ENCODE measurements at regions of chr1 and their contacts with region 1.

Region 1: GRCh38 chr1:19311959-19312781 is at the starts of genes AKR7A2 and SLC66A1:
- DNase-seq: peak; percentile 91 to 95 (median 94)
- H3K4me3 ChIP-seq: peak within 1 kb of the TSS; percentile 69 to 90 (median 89)
- H3K4me3 Mint-ChIP-seq: peak within 1 kb of the TSS; percentile 81 to 90
- H3K27ac ChIP-seq: peak within 1 kb of the TSS; percentile 22 to 89
- H3K27ac Mint-ChIP-seq: peak within 1 kb of the TSS; percentile 74 to 90 (median 84)
- H3K4me1 ChIP-seq: peaks cover 59 to 62% of the 10 kb centered on the region in 2 donors
- H3K4me1 Mint-ChIP-seq: peaks cover 60% of the 10 kb centered on the region
- H3K27me3 ChIP-seq: no peaks in the 10 kb centered on the region
- H3K27me3 Mint-ChIP-seq: peaks cover 0 to 4% (median 0%) of the 10 kb centered on the region in 3 donors
- CTCF ChIP-seq: no peak
- polyA plus RNA-seq, gene AKR7A2: 19.5 to 117 (median 89.3) TPM
- polyA plus RNA-seq, gene SLC66A1: 9.1 to 21.1 (median 9.7) TPM

Region 2: GRCh38 chr1:18926315-18927081 is 385.7 kb before region 1 on chr1:
- intact Hi-C with region 1: no loop called
- DNase-seq: peak; percentile 92 to 96 (median 96)
- H3K4me3 ChIP-seq: peak overlapping the region in 2 of 3 experiments; percentile 4 to 62
- H3K4me3 Mint-ChIP-seq: peak overlapping the region; percentile 64 to 86
- H3K27ac ChIP-seq: peak overlapping the region; percentile 89 to 99
- H3K27ac Mint-ChIP-seq: peak overlapping the region; percentile 89 to 97 (median 95)
- H3K4me1 ChIP-seq: peaks cover 67 to 72% of the 10 kb centered on the region in 2 donors
- H3K4me1 Mint-ChIP-seq: peaks cover 74% of the 10 kb centered on the region
- H3K27me3 ChIP-seq: no peaks in the 10 kb centered on the region
- H3K27me3 Mint-ChIP-seq: peaks cover 3 to 7% (median 5%) of the 10 kb centered on the region in 3 donors
- CTCF ChIP-seq: no peak

Region 3: GRCh38 chr1:18956369-18957135 is 355.6 kb before region 1 on chr1 and contains the start of gene IFFO2:
- intact Hi-C with region 1: loop called in 1 of 2 experiments (anchors 5 kb)
- DNase-seq: peak; percentile 90 to 93 (median 92)
- H3K4me3 ChIP-seq: peak within 1 kb of the TSS; percentile 58 to 85 (median 81)
- H3K4me3 Mint-ChIP-seq: peak within 1 kb of the TSS; percentile 92 to 93
- H3K27ac ChIP-seq: peak within 1 kb of the TSS in 1 of 2 donors; percentile 41
- H3K27ac Mint-ChIP-seq: peak within 1 kb of the TSS in 5 of 7 donors; percentile 8 to 94 (median 71)
- H3K4me1 ChIP-seq: peaks cover 37 to 52% of the 10 kb centered on the region in 2 donors
- H3K4me1 Mint-ChIP-seq: peaks cover 52% of the 10 kb centered on the region
- H3K27me3 ChIP-seq: peaks cover 5 to 46% of the 10 kb centered on the region in 2 donors
- H3K27me3 Mint-ChIP-seq: peaks cover 40 to 56% (median 45%) of the 10 kb centered on the region in 3 donors
- CTCF ChIP-seq: no peak
- polyA plus RNA-seq, gene IFFO2: 0.78 to 17.5 (median 0.94) TPM

Region 4: GRCh38 chr1:19209990-19210771 is 102.0 kb before region 1 on chr1 and contains the start of gene UBR4:
- intact Hi-C with region 1: loop called in 1 of 2 experiments (anchors 5 kb)
- DNase-seq: peak; percentile 94 to 97 (median 97)
- H3K4me3 ChIP-seq: peak within 1 kb of the TSS; percentile 83 to 98 (median 96)
- H3K4me3 Mint-ChIP-seq: peak within 1 kb of the TSS; percentile 93 to 99
- H3K27ac ChIP-seq: peak within 1 kb of the TSS; percentile 94 to 99
- H3K27ac Mint-ChIP-seq: peak within 1 kb of the TSS; percentile 99 to 100 (median 99)
- H3K4me1 ChIP-seq: peaks cover 23 to 40% of the 10 kb centered on the region in 2 donors
- H3K4me1 Mint-ChIP-seq: peaks cover 49% of the 10 kb centered on the region
- H3K27me3 ChIP-seq: no peaks in the 10 kb centered on the region
- H3K27me3 Mint-ChIP-seq: no peaks in the 10 kb centered on the region
- CTCF ChIP-seq: no peak
- polyA plus RNA-seq, gene UBR4: 44.3 to 93.8 (median 49.4) TPM

Region 5: DNA sequence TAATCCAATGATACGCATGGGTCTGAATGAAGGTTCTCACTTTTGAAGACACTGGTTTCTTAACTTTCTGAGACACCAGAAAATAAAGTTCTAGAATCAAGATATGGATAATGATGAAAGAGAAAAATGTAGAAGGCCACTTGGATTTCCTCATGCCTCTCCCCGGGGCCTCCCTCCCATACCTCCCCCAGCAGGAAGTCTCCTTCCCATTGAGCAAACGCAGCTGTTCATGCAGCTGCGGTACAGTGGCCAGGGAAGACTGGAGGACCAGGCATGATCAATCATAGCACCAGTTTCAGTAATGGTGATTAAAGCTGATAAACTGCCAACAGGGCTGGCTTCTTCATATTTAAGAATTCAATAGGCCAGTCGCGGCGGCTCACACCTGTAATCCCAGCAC is 91.2 kb before region 1 on chr1:
- intact Hi-C with region 1: no loop called
- DNase-seq: no peak
- H3K4me3 ChIP-seq: no peak overlapping the region
- H3K4me3 Mint-ChIP-seq: no peak overlapping the region
- H3K27ac ChIP-seq: no peak overlapping the region
- H3K27ac Mint-ChIP-seq: peak overlapping the region in 1 of 7 donors; percentile 63
- H3K4me1 ChIP-seq: no peaks in the 10 kb centered on the region
- H3K4me1 Mint-ChIP-seq: peaks cover 4% of the 10 kb centered on the region
- H3K27me3 ChIP-seq: no peaks in the 10 kb centered on the region
- H3K27me3 Mint-ChIP-seq: peaks cover 0 to 1% (median 0%) of the 10 kb centered on the region in 3 donors
- CTCF ChIP-seq: no peak

Region 6: GRCh38 chr1:19251305-19252196 is 60.6 kb before region 1 on chr1 and contains the starts of genes EMC1 and MRTO4:
- intact Hi-C with region 1: loop called in 1 of 2 experiments (anchors 5 kb)
- DNase-seq: peak; percentile 74 to 75 (median 74)
- H3K4me3 ChIP-seq: peak within 1 kb of the TSS; percentile 67 to 87 (median 85)
- H3K4me3 Mint-ChIP-seq: peak within 1 kb of the TSS; percentile 90 to 93
- H3K27ac ChIP-seq: peak within 1 kb of the TSS; percentile 70 to 96
- H3K27ac Mint-ChIP-seq: peak within 1 kb of the TSS; percentile 90 to 98 (median 94)
- H3K4me1 ChIP-seq: peaks cover 23 to 35% of the 10 kb centered on the region in 2 donors
- H3K4me1 Mint-ChIP-seq: peaks cover 24% of the 10 kb centered on the region
- H3K27me3 ChIP-seq: no peaks in the 10 kb centered on the region
- H3K27me3 Mint-ChIP-seq: no peaks in the 10 kb centered on the region
- CTCF ChIP-seq: no peak
- polyA plus RNA-seq, gene EMC1: 14.7 to 27.1 (median 18.5) TPM
- polyA plus RNA-seq, gene MRTO4: 4.9 to 8.7 (median 8.4) TPM

Region 7: DNA sequence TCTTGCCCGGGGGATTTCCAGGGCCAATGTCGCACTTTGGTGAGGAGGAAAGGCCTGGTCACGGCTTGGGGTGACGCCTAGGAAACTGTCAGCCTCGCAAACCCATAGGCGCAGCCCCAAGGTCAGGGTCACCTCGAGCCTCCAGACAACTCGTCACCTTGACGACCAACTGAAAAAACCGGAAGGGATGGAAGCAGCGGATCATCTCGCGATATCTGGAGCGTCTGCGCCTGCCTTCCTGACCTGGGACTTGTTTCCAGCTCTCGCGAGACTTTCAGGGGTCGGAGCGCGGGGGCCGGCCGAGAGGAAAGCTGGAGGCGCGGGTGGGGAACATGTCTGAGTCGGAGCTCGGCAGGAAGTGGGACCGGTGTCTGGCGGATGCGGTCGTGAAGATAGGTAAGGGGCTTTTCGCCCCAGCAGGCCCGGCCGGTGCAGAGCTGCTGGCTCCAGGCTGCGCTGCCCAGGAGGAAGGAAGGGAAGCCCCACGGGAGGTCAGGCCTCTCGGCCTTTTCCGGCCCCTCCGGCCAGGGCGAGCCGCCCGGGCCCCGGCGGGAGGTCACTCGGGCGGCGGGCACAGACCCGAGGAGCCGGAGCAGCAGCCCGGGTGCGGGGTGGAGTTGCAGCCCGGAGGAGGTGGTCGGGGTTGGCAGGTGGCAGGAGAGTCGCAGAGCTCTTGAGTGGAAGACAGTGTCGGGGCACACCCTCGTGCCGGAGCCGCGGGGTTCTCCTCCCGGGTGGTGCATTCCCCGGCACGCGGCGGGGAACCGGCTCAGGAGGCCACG is 284.7 kb after region 1 on chr1:
- intact Hi-C with region 1: loop called in 1 of 2 experiments (anchors 5 kb)
- DNase-seq: peak; percentile 99
- H3K4me3 ChIP-seq: peak overlapping the region; percentile 56 to 81 (median 69)
- H3K4me3 Mint-ChIP-seq: peak overlapping the region; percentile 98 to 100
- H3K27ac ChIP-seq: peak overlapping the region; percentile 94 to 95
- H3K27ac Mint-ChIP-seq: peak overlapping the region; percentile 98 to 100 (median 98)
- H3K4me1 ChIP-seq: peaks cover 20 to 28% of the 10 kb centered on the region in 2 donors
- H3K4me1 Mint-ChIP-seq: peaks cover 31% of the 10 kb centered on the region
- H3K27me3 ChIP-seq: no peaks in the 10 kb centered on the region
- H3K27me3 Mint-ChIP-seq: peaks cover 0 to 2% (median 1%) of the 10 kb centered on the region in 3 donors
- CTCF ChIP-seq: no peak

Region 8: GRCh38 chr1:19942088-19942487 is 629.9 kb after region 1 on chr1:
- intact Hi-C with region 1: no loop called
- DNase-seq: no peak
- H3K4me3 ChIP-seq: no peak overlapping the region
- H3K4me3 Mint-ChIP-seq: no peak overlapping the region
- H3K27ac ChIP-seq: no peak overlapping the region
- H3K27ac Mint-ChIP-seq: no peak overlapping the region
- H3K4me1 ChIP-seq: no peaks in the 10 kb centered on the region
- H3K4me1 Mint-ChIP-seq: no peaks in the 10 kb centered on the region
- H3K27me3 ChIP-seq: peaks cover 2 to 5% of the 10 kb centered on the region in 2 donors
- H3K27me3 Mint-ChIP-seq: peaks cover 1 to 19% (median 7%) of the 10 kb centered on the region in 3 donors
- CTCF ChIP-seq: no peak

Measured in CD14-positive monocyte (primary cell).